ENCODE measurements at regions of chr7 and their contacts with region 1.

Region 1: DNA sequence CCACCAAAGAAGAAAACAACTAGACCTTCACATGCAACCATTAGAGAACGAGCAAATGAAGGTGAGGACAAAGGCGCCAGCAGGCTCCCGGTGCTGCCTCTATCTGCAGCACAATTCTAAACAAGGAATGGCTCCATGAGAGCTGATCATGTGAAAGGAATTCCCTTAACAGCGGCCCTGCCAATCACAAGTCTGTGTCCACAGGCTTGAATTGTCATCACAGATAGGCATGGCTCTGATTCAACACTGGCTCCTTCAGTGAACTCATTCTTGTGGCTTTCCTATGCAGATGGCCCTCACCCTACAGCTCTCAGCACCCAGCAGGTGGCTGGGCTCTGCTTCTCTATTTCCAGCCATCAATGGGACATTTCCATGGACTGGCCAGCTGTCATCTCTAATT is 36.2 kb downstream of the LAMB1 start:
- DNase-seq: peak; percentile 77

Region 2: DNA sequence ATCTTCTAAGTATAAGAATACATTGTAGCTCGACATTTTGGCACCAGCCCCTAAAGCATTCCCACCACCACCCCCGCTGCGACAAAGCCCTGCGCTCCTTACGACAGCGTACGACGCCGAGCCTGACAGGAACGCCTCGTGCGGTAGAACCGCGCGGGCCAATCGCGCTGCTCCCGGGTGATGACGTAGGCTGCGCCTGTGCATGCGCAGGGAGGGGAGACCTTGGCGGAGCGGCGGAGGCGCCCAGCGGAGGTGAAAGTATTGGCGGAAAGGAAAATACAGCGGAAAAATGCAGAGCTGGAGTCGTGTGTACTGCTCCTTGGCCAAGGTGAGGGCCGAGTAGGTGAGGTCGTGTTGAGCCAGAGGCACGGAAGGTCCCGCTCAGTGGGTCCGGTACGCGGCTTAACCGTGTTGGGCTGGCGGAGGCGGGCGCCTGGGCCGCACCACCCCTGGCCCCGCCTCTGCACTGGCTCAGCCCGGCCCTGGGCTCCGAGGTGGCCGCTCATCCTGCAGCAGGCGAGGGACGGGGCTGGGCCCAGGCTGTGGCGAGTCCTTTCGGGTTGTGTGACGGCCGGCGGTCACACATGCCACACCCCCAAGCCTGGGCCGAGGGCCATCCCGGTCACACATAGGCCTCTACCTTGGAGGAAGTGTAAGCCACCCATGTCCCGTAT is 75.6 kb before region 1 on chr7 and contains the start of gene DLD:
- intact Hi-C with region 1: loop called (anchors 5 kb)
- DNase-seq: peak; percentile 98
- total RNA-seq, gene DLD: 299 TPM

Region 3: DNA sequence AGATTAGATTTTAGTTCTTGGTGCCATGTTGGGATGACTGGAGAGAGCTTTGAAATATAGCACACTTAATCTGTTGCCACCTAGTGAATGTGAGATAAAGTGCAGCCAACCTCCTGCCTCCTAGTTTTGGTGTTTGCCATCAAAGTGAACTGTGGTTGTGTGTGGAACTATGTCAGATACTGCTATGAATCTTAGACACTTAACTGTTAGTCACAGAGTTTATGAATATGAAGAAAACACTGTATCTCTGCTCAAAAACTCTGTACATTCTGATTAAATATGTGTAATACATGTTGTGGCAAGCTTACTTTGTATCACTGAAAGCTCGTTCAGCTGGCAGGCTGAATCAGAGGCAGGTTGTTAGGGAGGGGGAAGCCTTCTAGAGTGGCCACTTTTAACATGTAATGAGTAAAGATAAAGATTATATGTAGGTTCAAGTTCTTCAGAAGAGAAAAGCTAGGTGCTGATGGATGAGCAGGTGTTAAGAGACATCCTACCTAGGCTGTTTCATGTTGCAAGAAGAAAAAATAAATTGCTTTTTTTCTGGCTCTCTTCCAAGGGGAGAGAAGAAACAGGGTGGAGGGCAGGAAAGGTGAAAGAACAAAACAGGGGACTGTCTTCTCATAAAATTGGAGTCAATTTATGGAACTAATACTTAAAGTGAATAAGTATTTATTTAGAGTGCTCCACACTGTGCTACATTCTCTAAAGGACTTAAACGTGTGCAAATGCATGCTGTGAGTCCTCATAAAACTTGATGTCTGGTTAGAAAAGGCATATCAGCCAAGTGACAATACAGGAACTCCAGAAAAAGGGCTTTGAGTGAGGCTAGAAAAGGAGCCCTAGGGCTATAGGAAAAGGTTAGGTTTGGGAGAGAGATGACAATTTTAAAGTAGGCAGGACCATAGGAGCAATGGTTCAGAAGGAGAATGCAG is 50.4 kb after region 1 on chr7:
- intact Hi-C with region 1: loop called (anchors 2 kb)
- DNase-seq: no peak

Region 4: DNA sequence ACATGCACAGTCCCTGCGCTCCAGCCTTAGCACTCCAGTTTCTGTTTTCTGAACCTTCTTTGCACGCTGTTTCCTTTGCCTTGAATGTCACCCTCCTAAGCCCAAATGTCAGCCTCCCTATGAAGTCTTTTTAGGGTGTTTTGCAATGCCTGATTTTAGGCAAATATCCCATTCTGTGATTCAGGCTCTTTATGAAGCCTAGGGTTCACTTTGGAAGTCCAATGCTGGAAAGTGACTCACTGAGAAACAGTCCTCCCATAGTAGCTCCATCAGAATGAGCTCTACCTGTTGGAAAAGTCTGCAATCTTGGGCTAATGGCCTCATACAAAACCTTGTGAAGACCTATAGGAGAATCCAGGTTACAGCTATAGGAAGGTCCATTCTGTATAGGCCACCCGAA is 158.1 kb after region 1 on chr7:
- intact Hi-C with region 1: no loop called
- DNase-seq: no peak

Measured in cardiac septum (tissue), 1 donor.